Activated CD4-positive, alpha-beta T cell treated with anti-CD3 and anti-CD28 coated beads for 36 hours (primary cell): ENCODE measurements at regions of chr14 and their contacts with region 1.

Region 1: DNA sequence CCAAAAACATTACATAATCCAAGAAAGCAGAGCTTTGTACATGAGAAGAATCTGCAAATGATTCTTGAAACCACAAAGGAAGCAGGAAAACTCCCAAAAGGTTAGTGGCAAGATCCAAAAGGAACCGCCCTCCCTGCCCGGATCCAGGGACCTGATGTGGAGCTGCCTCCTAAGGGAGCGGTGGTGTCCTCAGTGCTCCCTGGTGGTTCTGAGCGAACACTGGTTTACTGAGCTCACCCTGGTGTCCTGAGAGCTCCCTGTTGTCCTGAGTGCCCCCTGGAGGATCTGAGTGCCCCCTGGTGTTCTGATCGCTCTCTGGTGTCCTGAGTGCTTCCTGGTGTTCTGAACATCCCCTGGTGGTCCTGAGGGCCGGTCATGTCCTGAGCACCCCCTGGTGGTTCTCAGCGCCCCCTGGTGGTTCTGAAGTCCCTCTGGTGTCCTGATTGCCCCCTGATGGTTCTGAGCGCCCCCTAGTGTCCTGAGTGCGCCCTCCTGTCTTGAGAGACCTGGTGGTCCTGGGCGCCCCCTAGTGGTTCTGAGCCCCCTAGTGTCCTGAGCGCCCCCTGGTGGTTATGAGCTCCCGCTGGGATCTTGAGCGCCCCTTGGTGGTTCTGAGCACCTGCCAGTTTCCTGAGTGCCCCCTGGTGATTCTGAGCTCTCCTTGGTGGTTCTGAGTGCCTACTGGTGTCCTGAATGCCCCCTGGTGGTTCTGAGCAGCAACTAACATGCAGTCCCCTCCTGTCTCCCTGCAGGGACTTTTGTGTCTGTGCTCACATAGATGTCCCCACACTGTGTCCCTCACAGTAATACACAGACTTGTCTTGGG is 891.1 kb downstream of the TMEM121 start:
- DNase-seq: peak; percentile 99
- ATAC-seq: peak; percentile 91
- H3K4me3 Mint-ChIP-seq: no peak overlapping the region
- H3K27ac Mint-ChIP-seq: no peak overlapping the region
- H3K4me1 Mint-ChIP-seq: peaks cover 11% of the 10 kb centered on the region
- H3K27me3 Mint-ChIP-seq: peaks cover 6% of the 10 kb centered on the region

Region 2: DNA sequence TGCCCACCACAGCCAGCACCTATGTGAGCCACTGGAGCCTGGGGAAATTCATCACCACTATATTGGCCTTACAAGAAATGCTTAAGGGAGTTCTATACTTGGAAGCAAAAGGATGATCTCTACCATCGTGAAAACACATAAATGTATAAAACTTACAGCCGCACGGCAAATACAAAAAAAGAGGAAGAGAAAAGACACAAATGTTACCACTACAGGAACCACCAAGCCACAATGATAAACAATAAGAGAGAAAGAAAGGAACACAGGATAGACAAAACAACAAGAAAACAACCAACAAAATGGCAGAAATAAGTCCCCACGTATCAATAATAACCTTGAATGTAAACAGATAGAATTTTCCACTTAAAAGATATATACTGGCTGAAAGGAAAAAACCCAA is 623.6 kb before region 1 on chr14:
- CTCF ChIA-PET with region 1: no interaction called
- POLR2A ChIA-PET with region 1: no interaction called
- intact Hi-C with region 1: no loop called
- DNase-seq: no peak
- ATAC-seq: no peak
- H3K4me3 Mint-ChIP-seq: no peak overlapping the region
- H3K27ac Mint-ChIP-seq: no peak overlapping the region
- H3K4me1 Mint-ChIP-seq: no peaks in the 10 kb centered on the region
- H3K27me3 Mint-ChIP-seq: peaks cover 27% of the 10 kb centered on the region

Region 3: DNA sequence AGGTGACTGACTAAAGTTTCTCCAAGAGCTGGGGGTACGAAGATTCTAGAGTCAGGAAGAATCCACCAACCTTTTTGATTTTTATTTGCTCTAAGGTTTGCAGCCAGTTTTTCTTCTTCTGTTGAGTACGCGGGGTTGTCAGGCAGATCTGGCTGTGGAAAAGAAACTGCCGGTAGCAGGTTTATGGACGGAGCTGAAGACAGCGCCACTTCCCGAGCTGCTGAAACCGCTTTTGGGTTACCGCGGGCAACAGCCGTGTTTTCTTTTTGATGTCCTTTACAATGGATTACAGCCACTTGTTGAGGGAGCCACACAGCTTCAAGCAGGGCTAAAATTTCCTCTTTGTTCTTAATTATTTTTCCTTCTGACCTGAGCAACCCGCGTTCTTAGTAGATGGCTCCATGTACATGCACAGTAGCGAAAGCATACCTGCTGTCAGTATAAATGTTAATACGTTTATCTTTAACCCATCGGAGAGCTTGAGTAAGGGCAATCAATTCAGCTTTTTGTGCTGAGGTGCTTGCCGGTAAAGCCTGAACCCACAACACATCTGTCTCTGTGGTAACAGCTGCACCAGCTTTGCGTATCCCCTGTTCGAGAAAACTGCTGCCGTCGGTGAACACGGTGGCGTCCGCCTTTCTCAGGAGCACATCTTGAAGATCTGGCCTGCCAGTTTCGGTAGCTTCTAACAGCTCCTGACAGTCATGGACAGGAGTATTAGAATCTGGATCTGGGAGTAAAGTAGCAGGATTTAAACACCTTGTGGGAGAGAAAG is 216.7 kb before region 1 on chr14:
- CTCF ChIA-PET with region 1: interaction called, 13 read pairs
- POLR2A ChIA-PET with region 1: no interaction called
- intact Hi-C with region 1: no loop called
- DNase-seq: peak; percentile 49
- ATAC-seq: peak; percentile 68
- H3K4me3 Mint-ChIP-seq: peak overlapping the region; percentile 60
- H3K27ac Mint-ChIP-seq: no peak overlapping the region
- H3K4me1 Mint-ChIP-seq: peaks cover 18% of the 10 kb centered on the region
- H3K27me3 Mint-ChIP-seq: peaks cover 33% of the 10 kb centered on the region

Region 4: DNA sequence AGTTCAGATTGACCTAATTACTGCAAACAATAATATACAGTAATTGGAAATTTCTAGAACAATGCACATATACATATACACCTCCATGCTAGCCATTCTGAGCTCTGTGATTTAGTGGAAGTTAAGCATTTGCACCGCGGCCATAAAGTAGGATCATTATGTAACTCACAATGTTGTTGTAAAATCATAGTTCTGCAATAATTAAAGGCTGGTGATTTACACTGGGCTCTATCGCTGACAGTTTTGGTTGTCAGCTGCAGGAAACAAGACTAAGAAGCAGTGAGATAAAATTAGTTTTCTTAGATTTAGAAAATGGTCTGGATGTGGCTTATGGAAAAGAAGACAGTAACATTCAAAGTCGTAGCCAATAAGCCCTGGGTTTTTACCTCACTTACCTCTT is 114.8 kb before region 1 on chr14:
- CTCF ChIA-PET with region 1: interaction called, 13 read pairs
- POLR2A ChIA-PET with region 1: no interaction called
- intact Hi-C with region 1: loop called in 1 of 2 experiments (anchors 5 kb)
- DNase-seq: no peak
- ATAC-seq: no peak
- H3K4me3 Mint-ChIP-seq: no peak overlapping the region
- H3K27ac Mint-ChIP-seq: no peak overlapping the region
- H3K4me1 Mint-ChIP-seq: peaks cover 13% of the 10 kb centered on the region
- H3K27me3 Mint-ChIP-seq: no peaks in the 10 kb centered on the region

Region 5: GRCh38 chr14:106372870-106373652 is 44.4 kb before region 1 on chr14:
- CTCF ChIA-PET with region 1: interaction called, 246 read pairs
- POLR2A ChIA-PET with region 1: no interaction called
- intact Hi-C with region 1: loop called in 1 of 2 experiments (anchors 5 kb)
- DNase-seq: peak; percentile 93
- ATAC-seq: peak; percentile 90
- H3K4me3 Mint-ChIP-seq: peak overlapping the region; percentile 47
- H3K27ac Mint-ChIP-seq: peak overlapping the region; percentile 27
- H3K4me1 Mint-ChIP-seq: peaks cover 21% of the 10 kb centered on the region
- H3K27me3 Mint-ChIP-seq: peaks cover 11% of the 10 kb centered on the region

Region 6: GRCh38 chr14:106436310-106436905 is 19.0 kb after region 1 on chr14:
- CTCF ChIA-PET with region 1: interaction called, 38 read pairs
- POLR2A ChIA-PET with region 1: no interaction called
- intact Hi-C with region 1: no loop called
- DNase-seq: peak; percentile 84
- ATAC-seq: no peak
- H3K4me3 Mint-ChIP-seq: no peak overlapping the region
- H3K27ac Mint-ChIP-seq: no peak overlapping the region
- H3K4me1 Mint-ChIP-seq: no peaks in the 10 kb centered on the region
- H3K27me3 Mint-ChIP-seq: peaks cover 10% of the 10 kb centered on the region

Region 7: GRCh38 chr14:106518054-106518943 is 100.9 kb after region 1 on chr14:
- CTCF ChIA-PET with region 1: interaction called, 14 read pairs
- POLR2A ChIA-PET with region 1: no interaction called
- intact Hi-C with region 1: no loop called
- DNase-seq: peak; percentile 92
- ATAC-seq: peak; percentile 84
- H3K4me3 Mint-ChIP-seq: no peak overlapping the region
- H3K27ac Mint-ChIP-seq: no peak overlapping the region
- H3K4me1 Mint-ChIP-seq: peaks cover 13% of the 10 kb centered on the region
- H3K27me3 Mint-ChIP-seq: no peaks in the 10 kb centered on the region

Region 8: GRCh38 chr14:106778986-106779385 is 361.5 kb after region 1 on chr14:
- CTCF ChIA-PET with region 1: no interaction called
- POLR2A ChIA-PET with region 1: no interaction called
- intact Hi-C with region 1: no loop called
- DNase-seq: no peak
- ATAC-seq: no peak
- H3K4me3 Mint-ChIP-seq: no peak overlapping the region
- H3K27ac Mint-ChIP-seq: no peak overlapping the region
- H3K4me1 Mint-ChIP-seq: peaks cover 23% of the 10 kb centered on the region
- H3K27me3 Mint-ChIP-seq: no peaks in the 10 kb centered on the region